SK-N-SH (cell line): ENCODE measurements at regions of chr6 and their contacts with region 1.

Region 1: GRCh38 chr6:36340618-36341454 is 4.1 kb upstream of the BNIP5 start:
- DNase-seq: peak; percentile 82
- H3K4me3 ChIP-seq: peak overlapping the region in 1 of 2 experiments; percentile 48; a peak in 1 of 4 replicates
- H3K27ac ChIP-seq: no peak overlapping the region
- H3K4me1 ChIP-seq: no peaks in the 10 kb centered on the region; a peak in 1 of 4 replicates
- H3K27me3 ChIP-seq: peaks cover 14% of the 10 kb centered on the region; the same call in 1 of the 2 replicates
- CTCF ChIP-seq: peak; percentile 98
- EP300 ChIP-seq: no peak
- RAD21 ChIP-seq: peak; percentile 68

Region 2: DNA sequence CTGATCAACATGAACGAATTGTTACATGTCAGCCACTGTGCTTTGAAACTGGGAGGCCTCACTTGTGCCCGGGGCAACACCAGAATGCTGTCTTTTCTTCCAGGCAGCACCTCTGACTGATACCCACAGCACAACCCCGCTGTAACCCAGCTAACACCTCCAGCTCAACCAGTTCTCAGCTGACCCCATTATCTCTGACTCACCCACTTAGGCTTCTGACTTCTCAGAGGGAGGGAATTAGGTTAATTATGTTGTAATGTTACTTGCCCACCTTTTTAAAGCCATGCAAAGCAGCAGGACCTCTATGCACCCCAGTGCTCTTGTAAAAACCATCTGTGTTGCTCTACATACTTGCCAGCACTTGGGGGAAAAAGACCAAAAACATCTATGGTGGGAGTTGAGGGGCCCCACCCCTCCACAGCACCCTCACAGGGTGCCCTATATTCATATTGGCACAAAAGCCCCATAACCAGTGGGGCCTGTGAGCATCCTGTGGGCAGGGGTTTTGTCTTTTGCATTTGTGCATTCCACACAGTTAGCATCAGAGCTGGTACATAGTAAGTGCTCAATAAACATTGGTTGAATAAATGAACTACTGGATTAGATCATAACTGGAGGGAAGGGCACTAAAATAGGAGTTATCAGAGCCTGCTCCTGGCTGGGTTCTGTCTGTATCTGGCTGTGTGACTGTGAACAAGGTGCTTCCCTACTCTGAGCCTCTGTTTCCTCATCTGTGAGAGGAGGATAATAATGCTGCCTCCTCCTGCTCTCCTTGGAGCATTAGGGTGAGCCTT is 26.4 kb before region 1 on chr6:
- CTCF ChIA-PET with region 1: interaction called, 17 read pairs
- POLR2A ChIA-PET with region 1: no interaction called
- DNase-seq: no peak
- H3K4me3 ChIP-seq: no peak overlapping the region
- H3K27ac ChIP-seq: no peak overlapping the region
- H3K4me1 ChIP-seq: peaks cover 0 to 2% of the 10 kb centered on the region in 2 experiments; a peak in 1 of 4 replicates
- H3K27me3 ChIP-seq: peaks cover 12% of the 10 kb centered on the region; the same call in 1 of the 2 replicates
- CTCF ChIP-seq: no peak
- EP300 ChIP-seq: no peak
- RAD21 ChIP-seq: no peak

Region 3: DNA sequence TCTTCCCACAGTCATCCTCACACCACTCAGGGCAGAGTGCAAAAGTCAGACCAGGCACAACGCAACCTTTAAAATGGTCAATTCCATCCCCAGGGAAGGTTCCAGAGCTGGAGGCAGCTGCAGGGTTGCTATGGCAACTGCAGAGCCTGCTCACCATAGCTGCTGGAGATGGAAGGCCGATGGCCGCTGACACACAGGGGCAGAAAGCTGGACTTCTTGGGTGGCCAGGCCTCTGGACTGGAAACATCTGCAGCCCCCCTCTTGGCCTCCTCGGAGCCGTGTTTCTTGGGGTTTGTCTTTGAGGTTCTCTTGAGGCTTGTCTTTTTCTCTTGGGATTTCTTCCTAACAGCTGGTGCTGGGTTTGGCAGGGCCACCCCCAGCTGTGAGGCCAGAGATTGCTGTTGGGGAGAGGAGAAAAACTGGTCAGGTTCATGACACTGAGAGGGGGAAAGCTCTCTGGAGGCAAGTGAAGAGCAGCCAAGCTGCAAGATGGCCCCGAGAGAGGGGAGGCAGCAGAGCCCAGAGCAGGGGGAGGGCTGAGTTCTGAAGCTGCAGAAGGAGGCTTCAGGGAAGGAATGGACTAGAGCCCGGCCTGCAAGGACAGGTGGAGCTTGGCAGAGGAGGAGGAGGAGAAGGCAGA is 14.4 kb before region 1 on chr6:
- CTCF ChIA-PET with region 1: interaction called, 28 read pairs
- POLR2A ChIA-PET with region 1: no interaction called
- DNase-seq: peak; percentile 58
- H3K4me3 ChIP-seq: no peak overlapping the region
- H3K27ac ChIP-seq: no peak overlapping the region
- H3K4me1 ChIP-seq: peaks cover 0 to 17% of the 10 kb centered on the region in 2 experiments; a peak in 1 of 4 replicates
- H3K27me3 ChIP-seq: no peaks in the 10 kb centered on the region; the same call in 1 of the 2 replicates
- CTCF ChIP-seq: no peak
- EP300 ChIP-seq: no peak
- RAD21 ChIP-seq: no peak

Region 4: DNA sequence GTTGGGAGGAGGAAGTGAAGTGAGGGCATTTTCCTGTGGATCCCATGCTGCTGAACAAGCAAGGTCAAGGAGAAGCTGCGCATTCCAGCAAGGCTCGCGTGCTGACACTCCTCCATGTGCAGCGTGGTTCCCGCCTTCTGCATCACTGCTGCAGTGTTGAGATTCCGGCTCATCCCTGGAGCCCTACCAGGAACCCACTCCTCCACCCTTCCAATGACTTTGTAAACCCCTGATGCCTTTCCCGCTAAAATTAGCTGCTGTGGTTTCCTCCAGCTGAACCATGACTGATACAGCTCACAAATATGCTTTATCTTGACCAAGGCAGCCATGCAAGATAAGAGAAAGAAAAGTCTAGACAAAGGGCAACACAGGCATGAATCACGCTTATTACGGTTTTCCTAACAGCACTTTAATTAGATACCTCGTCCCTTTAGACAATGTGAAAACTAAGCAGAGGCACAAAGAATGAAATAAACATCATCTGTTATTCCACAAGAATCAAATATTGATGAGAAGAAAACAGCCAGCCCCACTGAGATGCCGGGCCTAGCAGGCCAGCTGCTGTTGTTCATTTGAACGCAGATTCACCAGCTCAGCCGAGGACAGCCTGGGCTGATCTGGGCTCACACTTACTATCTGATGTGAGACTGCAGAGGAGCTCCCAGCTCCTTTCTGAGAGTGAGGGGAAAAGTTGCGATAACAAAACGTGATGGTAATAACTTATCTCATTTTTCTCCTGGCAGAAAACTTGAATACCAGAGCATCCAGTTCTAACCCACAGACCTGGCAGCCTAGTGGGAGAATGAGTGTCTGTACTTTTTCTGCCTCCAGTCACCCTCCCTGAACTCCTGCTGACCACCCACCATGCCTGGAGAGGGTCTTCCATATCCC is 10.1 kb after region 1 on chr6:
- CTCF ChIA-PET with region 1: interaction called, 42 read pairs
- POLR2A ChIA-PET with region 1: no interaction called
- DNase-seq: no peak
- H3K4me3 ChIP-seq: no peak overlapping the region
- H3K27ac ChIP-seq: peak overlapping the region in 1 of 2 experiments; percentile 50; a peak in 2 of 4 replicates
- H3K4me1 ChIP-seq: peaks cover 6 to 9% of the 10 kb centered on the region in 2 experiments; a peak in 2 of 4 replicates
- H3K27me3 ChIP-seq: no peaks in the 10 kb centered on the region
- CTCF ChIP-seq: no peak
- EP300 ChIP-seq: no peak
- RAD21 ChIP-seq: no peak

Region 5: DNA sequence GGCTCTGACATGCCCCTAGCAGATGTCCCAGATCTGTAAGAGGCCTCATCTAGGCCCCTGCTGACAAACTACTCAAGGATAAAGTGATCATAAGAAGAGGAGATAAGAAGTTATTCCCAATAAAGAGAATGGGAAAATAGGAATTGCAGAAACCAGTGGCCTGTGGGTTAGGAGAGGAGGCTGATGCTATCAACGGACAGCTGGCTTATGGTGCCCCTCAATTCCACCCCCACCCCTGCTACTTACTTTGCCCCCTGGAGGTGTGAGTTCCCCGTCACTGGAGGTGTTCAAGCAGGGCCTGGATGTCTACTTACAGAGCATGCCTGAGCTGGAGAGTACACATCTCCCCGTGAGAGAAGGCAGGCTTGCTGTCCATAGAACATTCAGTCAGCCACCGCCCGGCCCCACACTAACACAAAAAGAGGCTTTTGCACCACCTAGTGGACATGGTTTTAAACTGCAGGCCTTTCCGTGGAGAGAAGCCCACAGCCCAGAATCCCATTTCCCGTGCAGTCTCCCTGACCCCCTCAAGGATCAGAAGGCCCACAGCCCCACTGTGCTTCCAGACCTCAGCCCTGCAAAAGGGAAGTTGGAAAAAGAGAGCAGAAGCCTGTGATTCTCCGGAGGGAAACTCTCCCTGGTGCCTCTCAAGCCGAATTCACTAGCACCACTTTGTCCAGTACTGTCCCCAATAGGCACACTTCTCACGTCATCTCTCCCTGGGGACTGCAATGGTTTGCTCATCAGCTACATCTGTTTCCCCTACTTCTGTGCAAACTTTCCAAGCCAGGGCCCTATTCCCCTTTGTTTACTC is 19.6 kb after region 1 on chr6:
- CTCF ChIA-PET with region 1: interaction called, 49 read pairs
- POLR2A ChIA-PET with region 1: no interaction called
- DNase-seq: peak; percentile 87
- H3K4me3 ChIP-seq: peak overlapping the region in 1 of 2 experiments; percentile 40; a peak in 1 of 4 replicates
- H3K27ac ChIP-seq: no peak overlapping the region
- H3K4me1 ChIP-seq: peaks cover 2 to 6% of the 10 kb centered on the region in 2 experiments; a peak in 2 of 4 replicates
- H3K27me3 ChIP-seq: no peaks in the 10 kb centered on the region
- CTCF ChIP-seq: peak; percentile 79
- EP300 ChIP-seq: no peak
- RAD21 ChIP-seq: peak; percentile 94

Region 6: GRCh38 chr6:36526066-36526465 is 185.2 kb after region 1 on chr6:
- CTCF ChIA-PET with region 1: no interaction called
- POLR2A ChIA-PET with region 1: no interaction called
- DNase-seq: no peak
- H3K4me3 ChIP-seq: no peak overlapping the region
- H3K27ac ChIP-seq: no peak overlapping the region
- H3K4me1 ChIP-seq: no peaks in the 10 kb centered on the region
- H3K27me3 ChIP-seq: no peaks in the 10 kb centered on the region
- CTCF ChIP-seq: no peak
- EP300 ChIP-seq: no peak
- RAD21 ChIP-seq: no peak